CD14-positive monocyte (primary cell): ENCODE measurements at regions of chr3 and their contacts with region 1.

Region 1: DNA sequence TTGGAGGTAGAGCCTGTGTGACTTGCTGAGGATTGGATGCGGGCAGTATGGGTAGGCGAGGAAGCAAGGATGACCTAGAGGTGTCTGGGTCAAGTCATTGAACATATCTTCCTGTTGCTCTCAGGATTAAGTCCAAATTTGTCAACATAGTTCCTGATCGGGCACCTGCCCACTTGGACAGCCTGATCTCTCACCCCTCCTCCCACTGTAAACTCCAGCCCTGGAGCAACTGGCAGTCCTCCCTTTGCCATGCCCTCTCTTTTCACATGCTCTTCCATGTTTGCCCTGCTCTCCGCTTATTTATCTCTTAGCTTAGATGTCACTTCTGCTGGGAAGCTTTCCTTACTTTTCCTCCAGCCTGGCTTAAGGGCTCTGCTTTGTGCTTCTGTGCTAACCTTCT is 47.6 kb upstream of the PPP4R2 start:
- DNase-seq: no peak
- H3K4me3 ChIP-seq: no peak overlapping the region
- H3K4me3 Mint-ChIP-seq: no peak overlapping the region
- H3K27ac ChIP-seq: no peak overlapping the region
- H3K27ac Mint-ChIP-seq: peak overlapping the region in 1 of 7 donors; percentile 62
- H3K4me1 ChIP-seq: no peaks in the 10 kb centered on the region
- H3K4me1 Mint-ChIP-seq: peaks cover 3% of the 10 kb centered on the region
- H3K27me3 ChIP-seq: no peaks in the 10 kb centered on the region
- H3K27me3 Mint-ChIP-seq: peaks cover 0 to 2% (median 2%) of the 10 kb centered on the region in 3 donors
- CTCF ChIP-seq: no peak

Region 2: DNA sequence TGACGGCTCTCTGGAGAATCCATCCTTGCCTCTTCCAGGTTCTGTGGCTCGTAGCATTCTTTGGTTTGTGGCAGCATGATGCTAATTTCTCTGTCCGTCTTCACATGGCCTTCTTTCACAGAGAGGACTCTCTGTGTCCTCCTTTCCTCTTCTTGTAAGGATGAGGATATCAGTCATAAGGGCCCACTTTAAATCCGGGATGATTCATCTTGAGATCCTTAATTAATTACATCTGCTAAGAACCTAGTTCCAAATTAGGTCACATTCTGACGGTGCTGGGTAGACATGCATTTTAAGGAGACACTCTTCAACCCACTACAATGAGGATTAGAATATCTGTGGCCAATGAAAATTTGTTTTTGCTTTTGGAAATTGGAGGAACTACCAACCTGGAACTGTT is 76.8 kb before region 1 on chr3:
- intact Hi-C with region 1: no loop called
- DNase-seq: no peak
- H3K4me3 ChIP-seq: no peak overlapping the region
- H3K4me3 Mint-ChIP-seq: no peak overlapping the region
- H3K27ac ChIP-seq: no peak overlapping the region
- H3K27ac Mint-ChIP-seq: no peak overlapping the region
- H3K4me1 ChIP-seq: no peaks in the 10 kb centered on the region
- H3K4me1 Mint-ChIP-seq: no peaks in the 10 kb centered on the region
- H3K27me3 ChIP-seq: no peaks in the 10 kb centered on the region
- H3K27me3 Mint-ChIP-seq: peaks cover 5 to 14% (median 5%) of the 10 kb centered on the region in 3 donors
- CTCF ChIP-seq: no peak

Region 3: GRCh38 chr3:72996473-72997333 is 47.7 kb after region 1 on chr3 and contains the start of gene PPP4R2:
- intact Hi-C with region 1: loop called in 1 of 2 experiments (anchors 10 kb)
- DNase-seq: peak; percentile 87 to 93 (median 88)
- H3K4me3 ChIP-seq: peak within 1 kb of the TSS; percentile 82 to 98 (median 96)
- H3K4me3 Mint-ChIP-seq: peak within 1 kb of the TSS; percentile 83 to 89
- H3K27ac ChIP-seq: peak within 1 kb of the TSS; percentile 90 to 96
- H3K27ac Mint-ChIP-seq: peak within 1 kb of the TSS; percentile 82 to 96 (median 95)
- H3K4me1 ChIP-seq: peaks cover 25 to 40% of the 10 kb centered on the region in 2 donors
- H3K4me1 Mint-ChIP-seq: peaks cover 33% of the 10 kb centered on the region
- H3K27me3 ChIP-seq: no peaks in the 10 kb centered on the region
- H3K27me3 Mint-ChIP-seq: peaks cover 0 to 2% (median 0%) of the 10 kb centered on the region in 3 donors
- CTCF ChIP-seq: no peak
- polyA plus RNA-seq, gene PPP4R2: 14.3 to 25.4 (median 18.7) TPM

Region 4: DNA sequence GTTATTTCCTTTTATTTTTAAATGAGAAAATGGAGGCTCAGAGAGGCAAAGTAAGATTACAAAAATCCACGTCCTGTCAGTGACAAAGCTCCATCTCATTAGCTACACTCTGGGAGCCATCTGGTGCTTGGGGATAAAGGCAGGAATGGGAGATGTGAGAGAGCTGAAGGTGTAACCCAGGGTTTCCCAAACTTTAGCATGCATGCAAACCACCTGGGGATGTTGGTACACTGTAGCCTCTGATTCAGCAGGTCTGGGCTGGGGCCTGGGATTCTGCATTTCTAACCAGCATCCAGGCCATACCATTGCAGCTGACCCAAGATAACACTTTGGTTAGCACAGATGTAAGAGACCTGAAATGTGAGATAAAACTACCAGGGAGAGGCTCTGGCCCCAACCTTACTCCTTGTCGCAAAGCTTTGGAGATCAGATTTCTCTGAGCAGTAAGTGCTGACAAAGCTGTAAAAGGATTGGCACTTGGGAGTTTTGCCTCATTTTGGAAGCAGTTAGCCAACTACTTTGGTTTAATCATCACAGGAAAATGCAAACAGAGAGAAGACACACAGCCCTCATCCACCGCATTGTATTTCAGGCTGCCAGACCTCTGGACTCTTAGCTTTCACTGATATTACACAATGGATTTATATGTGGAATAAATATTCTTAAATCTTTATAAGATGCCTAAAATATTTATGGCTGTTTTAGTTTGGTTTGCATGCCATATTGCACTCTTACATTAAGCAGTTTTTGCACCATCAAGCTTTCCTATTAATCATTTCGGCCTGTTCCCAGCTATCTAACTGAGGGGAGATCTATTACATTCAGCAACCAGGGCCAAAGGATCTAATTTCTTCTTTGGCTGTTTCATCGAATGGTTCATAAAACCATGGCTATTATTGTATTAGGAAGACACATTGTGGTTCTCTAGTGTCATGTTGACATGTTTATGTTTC is 375.5 kb after region 1 on chr3:
- intact Hi-C with region 1: no loop called
- DNase-seq: no peak
- H3K4me3 ChIP-seq: no peak overlapping the region
- H3K4me3 Mint-ChIP-seq: no peak overlapping the region
- H3K27ac ChIP-seq: no peak overlapping the region
- H3K27ac Mint-ChIP-seq: no peak overlapping the region
- H3K4me1 ChIP-seq: no peaks in the 10 kb centered on the region
- H3K4me1 Mint-ChIP-seq: no peaks in the 10 kb centered on the region
- H3K27me3 ChIP-seq: peaks cover 0 to 2% of the 10 kb centered on the region in 2 donors
- H3K27me3 Mint-ChIP-seq: peaks cover 0 to 3% (median 2%) of the 10 kb centered on the region in 3 donors
- CTCF ChIP-seq: no peak

Region 5: DNA sequence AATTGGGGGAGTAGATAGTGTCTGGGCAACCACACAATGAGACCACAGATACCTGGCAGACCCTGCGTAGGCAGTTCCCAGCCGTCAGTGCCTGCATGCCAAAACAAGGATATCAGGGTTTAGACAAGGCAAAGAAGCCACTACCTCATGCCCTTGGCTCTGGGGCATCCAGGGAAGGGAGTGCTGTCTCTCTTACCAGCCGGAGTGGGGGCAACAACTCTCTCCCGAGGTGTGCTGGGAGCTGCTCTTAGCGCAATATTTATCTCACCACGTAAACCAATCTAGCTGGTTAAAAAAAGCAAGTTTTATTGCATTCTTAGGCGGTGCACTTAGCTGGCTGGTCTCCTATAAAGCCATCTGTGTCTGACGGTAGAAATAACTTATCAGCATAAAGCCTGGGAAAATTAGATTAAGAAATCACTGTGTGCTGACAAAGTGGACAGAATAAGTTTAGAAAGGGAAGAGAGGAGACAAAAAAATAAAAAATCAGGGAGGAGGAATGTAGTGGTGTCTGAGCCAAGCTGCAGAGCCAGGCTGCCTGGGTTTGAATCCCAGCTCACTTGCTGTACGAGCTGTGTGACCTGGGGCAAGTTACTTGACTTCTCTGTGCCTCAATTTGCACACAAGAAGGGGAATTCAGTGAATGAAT is 402.5 kb after region 1 on chr3:
- intact Hi-C with region 1: no loop called
- DNase-seq: no peak
- H3K4me3 ChIP-seq: no peak overlapping the region
- H3K4me3 Mint-ChIP-seq: no peak overlapping the region
- H3K27ac ChIP-seq: no peak overlapping the region
- H3K27ac Mint-ChIP-seq: no peak overlapping the region
- H3K4me1 ChIP-seq: no peaks in the 10 kb centered on the region
- H3K4me1 Mint-ChIP-seq: no peaks in the 10 kb centered on the region
- H3K27me3 ChIP-seq: peaks cover 0 to 4% of the 10 kb centered on the region in 2 donors
- H3K27me3 Mint-ChIP-seq: peaks cover 7 to 12% (median 9%) of the 10 kb centered on the region in 3 donors
- CTCF ChIP-seq: no peak